ENCODE measurements at regions of chr5 and their contacts with region 1.

Region 1: GRCh38 chr5:40688127-40688761 is 8.5 kb downstream of the PTGER4 start:
- DNase-seq: peak; percentile 72 to 93 (median 88)
- ATAC-seq: peak; percentile 69
- H3K4me3 ChIP-seq: peak overlapping the region in 1 of 2 experiments; percentile 77
- H3K4me3 Mint-ChIP-seq: peak overlapping the region; percentile 94
- H3K27ac ChIP-seq: peak overlapping the region; percentile 1 to 70
- H3K27ac Mint-ChIP-seq: peak overlapping the region; percentile 91
- H3K4me1 ChIP-seq: peaks cover 54% of the 10 kb centered on the region
- H3K4me1 Mint-ChIP-seq: peaks cover 83% of the 10 kb centered on the region
- H3K27me3 ChIP-seq: no peaks in the 10 kb centered on the region
- H3K27me3 Mint-ChIP-seq: no peaks in the 10 kb centered on the region
- CTCF ChIP-seq: peak; percentile 73

Region 2: GRCh38 chr5:39177631-39177964 is 1510.6 kb before region 1 on chr5:
- CTCF ChIA-PET with region 1: no interaction called
- POLR2A ChIA-PET with region 1: no interaction called
- intact Hi-C with region 1: loop called in 1 of 2 experiments (anchors 10 kb)
- DNase-seq: peak in 2 of 9 experiments; percentile 73 to 86
- ATAC-seq: peak; percentile 64
- H3K4me3 ChIP-seq: peak overlapping the region; percentile 20 to 36
- H3K4me3 Mint-ChIP-seq: peak overlapping the region; percentile 63
- H3K27ac ChIP-seq: peak overlapping the region; percentile 62 to 76
- H3K27ac Mint-ChIP-seq: peak overlapping the region; percentile 96
- H3K4me1 ChIP-seq: peaks cover 96% of the 10 kb centered on the region
- H3K4me1 Mint-ChIP-seq: peaks cover 96% of the 10 kb centered on the region
- H3K27me3 ChIP-seq: no peaks in the 10 kb centered on the region
- H3K27me3 Mint-ChIP-seq: no peaks in the 10 kb centered on the region
- CTCF ChIP-seq: no peak

Region 3: DNA sequence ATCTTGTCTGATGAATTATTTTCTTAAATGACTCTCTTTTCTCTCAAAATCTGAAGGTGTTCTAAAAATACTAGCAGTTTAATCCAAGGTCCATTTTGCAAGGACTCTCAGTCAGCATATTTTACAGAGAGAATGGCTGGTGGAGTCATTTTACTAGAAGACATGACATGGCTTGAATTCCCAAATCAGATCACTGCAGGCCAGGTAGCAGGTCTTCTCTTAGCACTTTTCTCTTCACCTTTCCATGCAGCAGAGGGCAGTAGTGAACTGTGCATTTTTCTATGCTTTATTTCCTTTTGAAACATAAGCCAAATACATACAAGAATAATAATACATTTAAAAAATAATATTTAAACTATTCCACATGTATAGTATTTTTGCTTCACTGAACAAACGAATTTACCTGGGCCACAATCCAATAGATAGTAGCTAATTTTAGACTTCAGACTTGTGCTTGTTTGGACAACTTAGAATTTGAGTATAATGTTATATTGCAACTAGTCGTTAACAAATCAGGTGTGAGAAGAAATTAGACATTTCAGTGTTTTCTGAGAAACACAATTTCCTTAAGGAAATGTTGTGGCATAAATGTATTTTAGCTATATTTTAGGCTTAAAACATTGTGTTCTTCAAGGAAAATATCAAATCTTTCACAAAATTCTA is 974.1 kb before region 1 on chr5:
- CTCF ChIA-PET with region 1: interaction called, 3 read pairs
- POLR2A ChIA-PET with region 1: no interaction called
- intact Hi-C with region 1: loop called in 1 of 2 experiments (anchors 5 kb)
- DNase-seq: peak in 6 of 9 experiments; percentile 1 to 66 (median 26)
- ATAC-seq: no peak
- H3K4me3 ChIP-seq: no peak overlapping the region
- H3K4me3 Mint-ChIP-seq: no peak overlapping the region
- H3K27ac ChIP-seq: no peak overlapping the region
- H3K27ac Mint-ChIP-seq: no peak overlapping the region
- H3K4me1 ChIP-seq: no peaks in the 10 kb centered on the region
- H3K4me1 Mint-ChIP-seq: no peaks in the 10 kb centered on the region
- H3K27me3 ChIP-seq: no peaks in the 10 kb centered on the region
- H3K27me3 Mint-ChIP-seq: peaks cover 9% of the 10 kb centered on the region
- CTCF ChIP-seq: peak; percentile 67

Region 4: GRCh38 chr5:40165794-40166728 is 522.2 kb before region 1 on chr5:
- CTCF ChIA-PET with region 1: interaction called, 3 read pairs
- POLR2A ChIA-PET with region 1: no interaction called
- intact Hi-C with region 1: loop called (anchors 1 to 5 kb)
- DNase-seq: peak in 2 of 9 experiments; percentile 27 to 47
- ATAC-seq: no peak
- H3K4me3 ChIP-seq: no peak overlapping the region
- H3K4me3 Mint-ChIP-seq: no peak overlapping the region
- H3K27ac ChIP-seq: no peak overlapping the region
- H3K27ac Mint-ChIP-seq: no peak overlapping the region
- H3K4me1 ChIP-seq: no peaks in the 10 kb centered on the region
- H3K4me1 Mint-ChIP-seq: no peaks in the 10 kb centered on the region
- H3K27me3 ChIP-seq: no peaks in the 10 kb centered on the region
- H3K27me3 Mint-ChIP-seq: no peaks in the 10 kb centered on the region
- CTCF ChIP-seq: no peak

Region 5: GRCh38 chr5:40410231-40410861 is 277.9 kb before region 1 on chr5:
- CTCF ChIA-PET with region 1: interaction called, 3 read pairs
- POLR2A ChIA-PET with region 1: interaction called, 9 read pairs
- intact Hi-C with region 1: loop called (anchors 2 kb)
- DNase-seq: peak; percentile 46 to 98 (median 69)
- ATAC-seq: peak; percentile 81
- H3K4me3 ChIP-seq: peak overlapping the region; percentile 30 to 31
- H3K4me3 Mint-ChIP-seq: peak overlapping the region; percentile 65
- H3K27ac ChIP-seq: peak overlapping the region; percentile 96 to 97
- H3K27ac Mint-ChIP-seq: peak overlapping the region; percentile 99
- H3K4me1 ChIP-seq: peaks cover 59% of the 10 kb centered on the region
- H3K4me1 Mint-ChIP-seq: peaks cover 63% of the 10 kb centered on the region
- H3K27me3 ChIP-seq: no peaks in the 10 kb centered on the region
- H3K27me3 Mint-ChIP-seq: no peaks in the 10 kb centered on the region
- CTCF ChIP-seq: no peak

Region 6: DNA sequence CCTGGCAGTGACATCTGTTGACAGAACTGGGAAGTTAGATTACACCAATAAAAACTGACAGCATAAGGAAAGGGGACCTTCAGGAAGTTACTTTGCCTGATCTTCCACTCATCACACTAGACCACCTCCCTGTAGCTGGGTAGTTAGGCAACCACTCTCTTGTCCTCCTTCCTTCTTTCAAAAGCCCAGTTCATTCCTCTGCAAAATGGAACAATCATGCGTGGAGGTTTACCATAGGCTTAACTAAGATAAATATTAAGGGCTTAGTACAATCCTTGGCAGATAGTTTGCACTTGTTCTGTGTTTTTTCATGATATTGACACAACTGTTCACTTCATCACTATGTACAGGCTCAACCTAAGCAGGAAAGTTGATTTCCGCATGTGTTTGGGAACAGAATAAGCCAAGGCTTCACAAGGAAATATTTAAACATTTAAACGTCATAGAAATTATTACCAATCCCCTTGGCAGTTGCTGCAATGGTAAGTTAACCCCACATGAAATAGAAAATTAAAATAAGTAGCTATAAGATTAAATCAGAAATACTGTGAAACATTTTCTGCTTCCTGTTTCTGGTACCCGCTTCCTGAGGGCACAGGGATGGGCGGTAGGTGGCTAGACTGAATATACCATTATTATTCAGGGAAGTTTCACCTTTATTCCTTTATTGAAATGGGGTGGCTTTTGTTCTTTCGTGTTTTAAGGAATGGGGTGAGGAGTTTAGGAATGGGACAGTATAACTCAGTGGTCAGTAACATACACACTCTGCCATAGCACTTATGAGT is 18.4 kb before region 1 on chr5:
- CTCF ChIA-PET with region 1: no interaction called
- POLR2A ChIA-PET with region 1: no interaction called
- intact Hi-C with region 1: no loop called
- DNase-seq: peak in 1 of 9 experiments; percentile 16
- ATAC-seq: no peak
- H3K4me3 ChIP-seq: no peak overlapping the region
- H3K4me3 Mint-ChIP-seq: no peak overlapping the region
- H3K27ac ChIP-seq: no peak overlapping the region
- H3K27ac Mint-ChIP-seq: no peak overlapping the region
- H3K4me1 ChIP-seq: peaks cover 27% of the 10 kb centered on the region
- H3K4me1 Mint-ChIP-seq: peaks cover 49% of the 10 kb centered on the region
- H3K27me3 ChIP-seq: no peaks in the 10 kb centered on the region
- H3K27me3 Mint-ChIP-seq: no peaks in the 10 kb centered on the region
- CTCF ChIP-seq: no peak

Region 7: DNA sequence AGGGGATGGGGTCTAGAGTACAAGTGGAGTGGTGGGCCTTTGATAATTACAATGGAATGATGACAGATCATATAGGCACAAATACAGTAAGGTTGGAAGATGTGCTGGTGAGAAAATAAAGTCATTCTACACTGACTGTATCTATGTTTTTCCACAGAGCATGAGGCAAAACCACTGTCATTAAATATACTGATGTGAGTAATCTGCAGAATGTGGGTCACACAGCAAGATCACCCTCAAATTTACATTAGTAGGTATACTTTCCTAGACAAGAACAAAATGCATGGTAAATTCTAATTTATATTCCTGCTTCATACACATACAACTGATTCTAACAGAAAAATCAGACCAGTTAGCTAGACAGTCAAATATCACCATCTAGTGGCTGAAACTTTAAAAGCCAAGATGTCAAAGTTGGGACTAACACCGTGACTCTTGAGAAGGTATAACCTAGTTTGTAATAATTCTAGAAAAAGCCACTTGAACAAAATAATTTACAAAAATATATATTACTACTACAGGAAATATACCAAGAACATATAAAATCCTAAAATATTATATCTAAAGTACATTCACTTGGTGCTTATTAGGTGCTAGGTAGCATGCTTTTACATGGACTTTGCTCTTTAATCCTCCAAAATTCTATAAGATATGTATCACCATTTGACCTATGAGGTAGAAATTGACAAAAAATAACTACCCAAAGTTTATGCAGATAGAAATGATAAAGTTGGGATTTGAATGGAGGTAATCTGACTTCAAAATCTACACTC is 48.0 kb after region 1 on chr5:
- CTCF ChIA-PET with region 1: interaction called, 5 read pairs
- POLR2A ChIA-PET with region 1: no interaction called
- intact Hi-C with region 1: loop called (anchors 1 to 5 kb)
- DNase-seq: peak in 2 of 9 experiments; percentile 68 to 74
- ATAC-seq: peak; percentile 71
- H3K4me3 ChIP-seq: no peak overlapping the region
- H3K4me3 Mint-ChIP-seq: no peak overlapping the region
- H3K27ac ChIP-seq: no peak overlapping the region
- H3K27ac Mint-ChIP-seq: no peak overlapping the region
- H3K4me1 ChIP-seq: no peaks in the 10 kb centered on the region
- H3K4me1 Mint-ChIP-seq: peaks cover 23% of the 10 kb centered on the region
- H3K27me3 ChIP-seq: no peaks in the 10 kb centered on the region
- H3K27me3 Mint-ChIP-seq: no peaks in the 10 kb centered on the region
- CTCF ChIP-seq: peak; percentile 88

Region 8: DNA sequence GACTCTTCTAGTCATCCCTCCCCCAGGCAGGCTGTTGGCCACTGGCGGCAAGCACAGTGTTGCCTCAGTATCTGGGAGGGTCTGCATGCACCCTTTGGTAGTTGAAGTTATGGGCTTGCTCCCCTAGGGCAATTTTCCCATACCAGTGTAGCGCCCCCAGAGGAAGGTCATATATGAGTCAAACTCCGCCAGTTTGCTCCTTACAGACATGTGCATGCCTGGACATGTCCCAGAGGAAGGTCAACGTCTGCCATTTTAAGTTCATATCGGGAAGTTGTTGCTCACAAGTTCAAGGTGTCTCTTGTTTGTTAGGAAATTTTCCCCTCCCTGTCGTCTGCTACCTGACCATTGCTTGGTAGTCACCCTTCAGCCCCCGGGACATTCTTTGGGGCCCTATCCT is 434.2 kb after region 1 on chr5:
- CTCF ChIA-PET with region 1: no interaction called
- POLR2A ChIA-PET with region 1: no interaction called
- intact Hi-C with region 1: no loop called
- DNase-seq: no peak
- ATAC-seq: no peak
- H3K4me3 ChIP-seq: no peak overlapping the region
- H3K4me3 Mint-ChIP-seq: no peak overlapping the region
- H3K27ac ChIP-seq: no peak overlapping the region
- H3K27ac Mint-ChIP-seq: no peak overlapping the region
- H3K4me1 ChIP-seq: no peaks in the 10 kb centered on the region
- H3K4me1 Mint-ChIP-seq: no peaks in the 10 kb centered on the region
- H3K27me3 ChIP-seq: no peaks in the 10 kb centered on the region
- H3K27me3 Mint-ChIP-seq: no peaks in the 10 kb centered on the region
- CTCF ChIP-seq: no peak

Measured in CD8-positive, alpha-beta T cell (primary cell).